Activated naive CD4-positive, alpha-beta T cell treated with anti-CD3 and anti-CD28 coated beads, Interleukin-2, amount 10 ng/mL, durations not matched to agents 7 days and 5 days (primary cell): ENCODE measurements at regions of chr6 and their contacts with region 1.

Region 1: GRCh38 chr6:133923938-133924593 is 29.0 kb upstream of the TBPL1 start:
- DNase-seq: peak; percentile 70
- H3K4me3 Mint-ChIP-seq: no peak overlapping the region
- H3K27ac Mint-ChIP-seq: no peak overlapping the region
- H3K4me1 Mint-ChIP-seq: no peaks in the 10 kb centered on the region
- H3K27me3 Mint-ChIP-seq: peaks cover 13% of the 10 kb centered on the region

Region 2: DNA sequence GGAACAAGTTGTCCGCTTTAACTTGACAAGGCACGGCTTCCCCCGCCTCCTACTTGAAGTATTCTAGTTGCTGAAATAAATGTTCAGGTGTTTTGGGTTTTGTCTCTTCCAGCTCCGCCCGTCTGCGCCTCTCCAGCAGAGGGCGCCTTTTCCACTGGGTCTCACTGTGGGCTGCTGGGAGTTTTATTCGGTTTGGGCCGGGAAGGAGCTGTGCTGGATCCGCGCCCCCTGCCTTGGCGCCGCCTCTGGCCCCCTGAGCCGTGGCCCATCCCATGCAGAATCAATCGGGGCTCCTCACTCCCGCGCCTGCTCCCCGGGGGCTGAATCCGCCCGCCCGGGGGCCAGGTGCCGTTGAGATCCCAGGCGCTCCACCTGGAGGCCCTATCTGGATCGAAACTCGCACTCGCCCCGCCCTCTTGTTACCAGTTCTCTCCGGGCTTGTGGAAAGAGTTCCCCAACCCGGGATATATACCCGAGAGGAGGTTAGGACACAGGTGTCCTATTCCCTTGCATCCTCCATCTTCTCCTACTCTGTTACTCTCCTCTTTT is 86.2 kb before region 1 on chr6:
- CTCF ChIA-PET with region 1: interaction called, 16 read pairs
- DNase-seq: peak; percentile 73
- H3K4me3 Mint-ChIP-seq: peak overlapping the region; percentile 61
- H3K27ac Mint-ChIP-seq: no peak overlapping the region
- H3K4me1 Mint-ChIP-seq: peaks cover 5% of the 10 kb centered on the region
- H3K27me3 Mint-ChIP-seq: peaks cover 12% of the 10 kb centered on the region

Region 3: GRCh38 chr6:133855276-133855990 is 68.6 kb before region 1 on chr6:
- CTCF ChIA-PET with region 1: no interaction called
- DNase-seq: no peak
- H3K4me3 Mint-ChIP-seq: no peak overlapping the region
- H3K27ac Mint-ChIP-seq: no peak overlapping the region
- H3K4me1 Mint-ChIP-seq: no peaks in the 10 kb centered on the region
- H3K27me3 Mint-ChIP-seq: peaks cover 42% of the 10 kb centered on the region

Region 4: DNA sequence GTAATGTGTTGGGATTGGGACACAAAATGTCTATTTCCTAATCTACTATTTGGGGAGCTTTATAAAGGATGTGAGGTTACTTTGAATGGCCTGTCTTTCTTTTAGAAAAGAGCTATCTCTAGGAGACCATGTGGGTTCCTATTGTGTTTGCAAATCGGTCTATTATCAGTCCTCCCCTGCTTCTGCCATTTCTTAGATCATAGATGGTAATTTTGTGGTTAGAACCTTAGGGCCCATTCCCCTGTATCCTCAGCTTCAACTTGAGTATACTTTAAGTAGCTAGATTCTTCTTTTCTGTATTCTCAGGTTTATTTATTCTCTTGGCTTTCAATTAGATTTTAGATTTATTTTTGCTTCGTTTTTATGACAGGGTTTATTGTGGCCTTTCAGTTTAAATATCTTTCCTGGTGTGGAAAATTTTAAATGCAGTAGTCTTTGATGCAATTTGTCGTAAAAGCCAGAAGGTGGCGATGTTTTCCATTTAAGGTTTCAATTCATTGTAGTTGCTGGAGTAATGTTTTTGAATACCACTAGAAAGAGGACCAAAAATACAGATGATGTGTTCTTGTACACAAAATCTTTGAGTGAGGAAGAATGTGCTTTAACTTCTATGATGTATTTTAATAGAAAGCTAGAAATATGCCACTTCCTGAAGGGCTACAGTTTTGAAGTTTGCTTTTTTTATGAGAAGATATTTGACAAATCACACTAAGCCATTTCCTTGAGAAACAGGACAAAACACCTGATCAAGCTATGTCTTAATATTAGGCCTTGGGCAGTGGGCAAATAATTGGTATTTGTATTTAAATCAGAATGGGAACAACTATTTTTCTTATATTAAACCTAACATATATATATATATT is 49.3 kb after region 1 on chr6:
- CTCF ChIA-PET with region 1: interaction called, 38 read pairs
- DNase-seq: no peak
- H3K4me3 Mint-ChIP-seq: no peak overlapping the region
- H3K27ac Mint-ChIP-seq: no peak overlapping the region
- H3K4me1 Mint-ChIP-seq: peaks cover 16% of the 10 kb centered on the region
- H3K27me3 Mint-ChIP-seq: no peaks in the 10 kb centered on the region

Region 5: DNA sequence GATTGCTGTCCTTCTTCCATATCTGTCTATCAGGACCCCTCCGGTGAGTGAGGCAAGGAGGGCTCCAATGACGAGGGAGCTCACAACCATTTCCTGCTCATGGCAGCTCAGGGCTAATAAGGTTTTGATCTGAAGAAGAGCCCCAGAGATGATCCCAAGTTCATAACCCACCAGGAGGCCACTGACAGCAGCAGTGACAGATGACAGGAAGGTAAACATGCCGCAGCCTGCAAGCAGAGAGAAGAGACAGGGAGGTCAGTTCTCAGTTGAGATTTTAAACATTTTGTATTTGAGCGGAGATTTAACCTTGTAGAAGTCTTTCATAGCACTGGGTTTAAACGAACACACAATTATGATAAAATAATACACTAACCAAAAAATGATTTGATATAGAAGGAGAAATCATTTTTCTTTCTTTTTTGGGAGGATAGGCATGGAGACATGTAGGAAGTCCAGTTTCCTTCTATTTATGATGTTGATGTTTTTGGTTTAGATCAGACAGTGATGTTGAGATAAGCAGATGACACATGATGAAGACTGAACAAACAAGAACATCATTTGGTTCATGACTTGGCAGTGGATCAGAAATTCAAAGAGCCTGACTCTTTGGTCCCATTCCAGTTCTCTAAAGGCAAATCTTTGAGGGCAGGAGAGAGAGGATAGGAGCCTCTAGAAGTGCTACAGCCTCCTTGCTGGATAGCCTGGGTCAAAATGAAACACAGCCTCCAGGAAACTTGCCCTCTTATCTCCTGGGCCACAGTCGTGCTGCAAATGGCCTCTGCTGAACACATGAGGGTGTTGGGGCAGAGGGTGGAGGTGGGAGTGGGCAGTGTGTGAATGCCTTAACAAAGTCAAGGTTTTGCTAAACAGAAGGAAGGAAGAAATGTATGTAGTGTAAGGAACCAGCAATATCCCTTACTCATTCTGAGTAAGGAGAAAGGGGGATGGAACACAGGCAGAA is 105.7 kb after region 1 on chr6:
- CTCF ChIA-PET with region 1: no interaction called
- DNase-seq: no peak
- H3K4me3 Mint-ChIP-seq: no peak overlapping the region
- H3K27ac Mint-ChIP-seq: no peak overlapping the region
- H3K4me1 Mint-ChIP-seq: peaks cover 8% of the 10 kb centered on the region
- H3K27me3 Mint-ChIP-seq: peaks cover 8% of the 10 kb centered on the region

Region 6: DNA sequence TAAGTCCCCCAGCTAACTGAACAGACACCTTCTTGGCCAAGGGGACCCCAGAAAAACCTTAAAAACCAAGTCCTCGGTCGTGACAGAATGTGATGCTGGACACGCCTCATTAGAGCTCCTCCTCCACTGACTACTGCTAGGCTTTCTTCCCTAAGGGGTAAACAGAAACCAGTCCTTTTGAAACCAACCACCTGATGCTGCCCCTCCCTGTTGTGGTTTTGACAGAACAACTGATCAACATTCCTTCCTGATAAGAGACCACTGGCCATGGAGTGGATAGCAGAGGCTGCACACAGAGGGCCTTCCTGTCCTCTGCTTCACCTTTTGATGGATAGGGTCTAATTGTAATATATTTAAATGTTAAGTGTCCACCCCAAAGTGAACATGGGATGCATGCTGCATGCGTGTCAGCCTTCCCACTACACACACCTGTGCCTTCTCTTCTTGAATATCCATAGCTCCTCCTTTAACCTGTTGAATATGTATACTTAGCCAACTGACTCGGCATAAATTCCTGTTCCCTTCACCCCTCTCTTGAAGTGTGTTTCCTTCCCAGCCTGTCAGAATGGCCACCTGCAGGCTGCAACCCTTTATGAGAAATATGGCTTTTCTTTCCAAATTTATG is 156.2 kb after region 1 on chr6:
- CTCF ChIA-PET with region 1: interaction called, 10 read pairs
- DNase-seq: peak; percentile 29
- H3K4me3 Mint-ChIP-seq: no peak overlapping the region
- H3K27ac Mint-ChIP-seq: no peak overlapping the region
- H3K4me1 Mint-ChIP-seq: peaks cover 24% of the 10 kb centered on the region
- H3K27me3 Mint-ChIP-seq: peaks cover 6% of the 10 kb centered on the region

Region 7: GRCh38 chr6:134097114-134097707 is 173.1 kb after region 1 on chr6:
- CTCF ChIA-PET with region 1: interaction called, 188 read pairs
- DNase-seq: peak; percentile 79
- H3K4me3 Mint-ChIP-seq: no peak overlapping the region
- H3K27ac Mint-ChIP-seq: no peak overlapping the region
- H3K4me1 Mint-ChIP-seq: peaks cover 4% of the 10 kb centered on the region
- H3K27me3 Mint-ChIP-seq: peaks cover 14% of the 10 kb centered on the region

Region 8: DNA sequence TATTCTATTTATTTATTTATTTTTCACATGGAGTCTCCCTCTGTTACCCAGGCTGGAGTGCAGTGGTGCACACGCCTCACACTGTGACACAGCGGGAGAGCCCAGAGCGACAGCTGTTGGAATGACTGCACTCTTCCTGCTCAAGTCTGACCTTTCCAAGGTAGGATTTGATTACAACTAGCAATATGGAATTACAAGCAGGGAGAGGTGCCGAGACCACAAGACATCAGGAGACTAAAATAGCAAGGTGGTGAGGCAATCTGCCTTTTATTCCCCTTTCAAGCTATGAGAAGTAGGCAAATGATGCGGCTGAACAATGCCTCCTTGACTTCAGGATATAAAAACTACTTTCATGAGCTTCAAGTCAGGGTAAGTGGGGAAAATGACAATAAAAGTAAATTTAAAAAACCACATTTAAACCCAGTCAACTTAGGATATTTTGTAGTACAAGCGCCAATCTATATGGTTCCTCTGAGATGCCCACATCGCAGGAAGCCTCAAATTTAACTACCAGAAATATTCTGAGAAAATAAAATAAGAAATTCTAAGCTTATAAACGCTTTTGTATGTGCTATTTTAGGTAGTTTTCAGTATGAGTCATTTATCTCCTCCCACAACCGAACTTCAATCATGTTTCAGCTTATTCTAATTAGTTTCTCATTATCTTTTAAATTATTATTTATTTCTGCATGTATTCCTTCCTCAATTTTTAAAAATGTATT is 540.8 kb after region 1 on chr6:
- CTCF ChIA-PET with region 1: no interaction called
- DNase-seq: no peak
- H3K4me3 Mint-ChIP-seq: no peak overlapping the region
- H3K27ac Mint-ChIP-seq: no peak overlapping the region
- H3K4me1 Mint-ChIP-seq: peaks cover 2% of the 10 kb centered on the region
- H3K27me3 Mint-ChIP-seq: no peaks in the 10 kb centered on the region

Region 9: GRCh38 chr6:134630508-134631121 is 706.5 kb after region 1 on chr6:
- CTCF ChIA-PET with region 1: no interaction called
- DNase-seq: no peak
- H3K4me3 Mint-ChIP-seq: no peak overlapping the region
- H3K27ac Mint-ChIP-seq: no peak overlapping the region
- H3K4me1 Mint-ChIP-seq: peaks cover 25% of the 10 kb centered on the region
- H3K27me3 Mint-ChIP-seq: peaks cover 11% of the 10 kb centered on the region